ENCODE measurements at regions of chr15 and their contacts with region 1.

Region 1: GRCh38 chr15:70091726-70092463 is 5.8 kb downstream of the TLE3 start:
- DNase-seq: peak; percentile 81
- H3K4me3 ChIP-seq: peak overlapping the region in 1 of 2 experiments; percentile 28; a peak in 1 of 4 replicates
- H3K27ac ChIP-seq: peak overlapping the region in 1 of 2 experiments; percentile 86; a peak in 2 of 4 replicates
- H3K4me1 ChIP-seq: peaks cover 12 to 70% of the 10 kb centered on the region in 2 experiments; a peak in 3 of 4 replicates
- H3K27me3 ChIP-seq: no peaks in the 10 kb centered on the region
- CTCF ChIP-seq: no peak
- EP300 ChIP-seq: peak in 1 of 2 experiments; percentile 86; a peak in 2 of 4 replicates
- RAD21 ChIP-seq: peak; percentile 23

Region 2: DNA sequence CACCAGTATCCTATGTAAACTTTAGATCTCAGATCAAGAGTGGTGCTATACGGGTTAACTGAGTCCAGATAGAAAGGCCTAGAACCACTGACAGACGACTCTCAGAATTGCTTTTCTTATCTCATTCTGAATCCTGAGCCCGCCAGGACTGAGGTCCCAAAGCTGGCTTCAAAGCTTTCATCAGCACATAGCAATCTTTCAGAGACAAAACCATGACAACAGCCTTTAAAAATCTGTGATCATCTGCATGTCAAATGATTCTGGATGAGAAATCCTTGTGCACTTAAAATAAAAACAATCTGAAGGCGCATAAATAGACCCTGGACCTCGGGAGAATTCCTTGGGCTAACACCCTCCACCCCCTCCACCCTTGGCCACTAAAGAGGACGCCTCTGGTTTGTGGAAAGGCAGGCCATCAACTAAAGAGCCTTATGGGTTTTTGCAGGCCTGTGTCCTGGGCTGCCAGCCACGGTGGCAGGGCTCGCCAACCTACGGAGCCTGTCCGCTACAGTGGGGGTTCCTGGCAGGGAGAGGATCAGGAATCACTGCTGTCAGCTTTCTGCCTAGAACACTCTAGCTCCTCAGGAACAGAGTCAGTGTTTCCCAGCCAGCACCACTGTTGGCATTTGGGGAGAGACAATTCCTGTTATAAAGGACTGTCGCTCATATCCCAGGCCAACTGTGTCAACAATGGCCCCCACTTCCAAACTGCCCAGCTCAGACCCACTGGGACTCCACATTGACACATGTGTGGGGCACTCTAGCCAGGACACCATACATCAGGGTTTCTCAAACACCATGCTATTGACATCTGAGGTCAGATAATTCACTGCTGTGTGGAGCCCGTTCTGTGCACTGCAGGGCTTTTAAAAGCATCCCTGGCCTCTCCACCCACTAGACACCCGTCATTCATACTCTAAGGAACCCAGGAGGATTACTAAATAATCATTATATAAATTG is 14.4 kb before region 1 on chr15:
- CTCF ChIA-PET with region 1: interaction called, 16 read pairs
- POLR2A ChIA-PET with region 1: no interaction called
- DNase-seq: no peak
- H3K4me3 ChIP-seq: no peak overlapping the region
- H3K27ac ChIP-seq: no peak overlapping the region
- H3K4me1 ChIP-seq: peaks cover 0 to 26% of the 10 kb centered on the region in 2 experiments; a peak in 2 of 4 replicates
- H3K27me3 ChIP-seq: no peaks in the 10 kb centered on the region
- CTCF ChIP-seq: no peak
- EP300 ChIP-seq: no peak
- RAD21 ChIP-seq: no peak

Region 3: GRCh38 chr15:70103880-70104626 is 12.2 kb after region 1 on chr15:
- CTCF ChIA-PET with region 1: no interaction called
- POLR2A ChIA-PET with region 1: no interaction called
- DNase-seq: no peak
- H3K4me3 ChIP-seq: no peak overlapping the region
- H3K27ac ChIP-seq: no peak overlapping the region
- H3K4me1 ChIP-seq: peaks cover 4 to 20% of the 10 kb centered on the region in 2 experiments; a peak in 3 of 4 replicates
- H3K27me3 ChIP-seq: peaks cover 17% of the 10 kb centered on the region
- CTCF ChIP-seq: no peak
- EP300 ChIP-seq: no peak
- RAD21 ChIP-seq: no peak

Region 4: DNA sequence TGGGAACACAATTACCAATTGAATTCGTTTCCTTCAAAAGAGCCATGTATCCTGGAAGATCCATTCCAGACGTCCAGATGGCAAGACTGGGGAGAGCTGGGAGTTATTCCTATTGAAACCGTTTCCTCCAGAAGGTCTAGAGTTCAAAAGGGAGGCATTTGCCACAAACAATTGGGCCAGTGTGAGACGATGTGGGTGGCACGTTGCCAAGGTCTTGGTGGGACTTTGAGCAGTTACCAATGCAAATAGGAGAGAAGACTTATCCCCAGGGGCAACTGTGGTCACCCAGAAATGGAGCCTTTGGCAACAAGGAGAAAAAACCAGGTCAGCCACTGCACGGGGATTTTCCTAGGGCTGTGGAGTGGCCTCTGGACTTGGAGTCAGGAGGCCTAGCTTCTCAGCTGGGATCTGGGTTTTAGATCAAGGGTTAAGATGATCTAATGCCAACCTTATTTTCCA is 35.4 kb after region 1 on chr15:
- CTCF ChIA-PET with region 1: no interaction called
- POLR2A ChIA-PET with region 1: no interaction called
- DNase-seq: no peak
- H3K4me3 ChIP-seq: no peak overlapping the region
- H3K27ac ChIP-seq: no peak overlapping the region
- H3K4me1 ChIP-seq: peaks cover 0 to 25% of the 10 kb centered on the region in 2 experiments; a peak in 1 of 4 replicates
- H3K27me3 ChIP-seq: peaks cover 9% of the 10 kb centered on the region; the same call in 1 of the 2 replicates
- CTCF ChIP-seq: no peak
- EP300 ChIP-seq: no peak
- RAD21 ChIP-seq: no peak